Right cardiac atrium (tissue), 5 donors: ENCODE measurements at regions of chr11 and their contacts with region 1.

Region 1: GRCh38 chr11:76436020-76436419 is 8.8 kb upstream of the EMSY start:
- DNase-seq: no peak
- ATAC-seq: no peak
- H3K4me3 ChIP-seq: no peak overlapping the region
- H3K27ac ChIP-seq: no peak overlapping the region
- H3K4me1 ChIP-seq: no peaks in the 10 kb centered on the region
- H3K27me3 ChIP-seq: no peaks in the 10 kb centered on the region

Region 2: GRCh38 chr11:76380967-76381719 is 54.9 kb before region 1 on chr11 and contains the starts of genes GVQW3 and THAP12:
- intact Hi-C with region 1: loop called in 1 of 4 experiments (anchors 10 kb)
- DNase-seq: peak; percentile 97 to 99 (median 99)
- ATAC-seq: peak; percentile 99
- H3K4me3 ChIP-seq: peak within 1 kb of the TSS; percentile 92
- H3K27ac ChIP-seq: peak within 1 kb of the TSS; percentile 31
- H3K4me1 ChIP-seq: peaks cover 7% of the 10 kb centered on the region
- H3K27me3 ChIP-seq: no peaks in the 10 kb centered on the region
- total RNA-seq, gene GVQW3: 0.92 to 3.5 (median 2.1) TPM
- total RNA-seq, gene THAP12: 18.0 to 23.6 (median 19.7) TPM

Region 3: DNA sequence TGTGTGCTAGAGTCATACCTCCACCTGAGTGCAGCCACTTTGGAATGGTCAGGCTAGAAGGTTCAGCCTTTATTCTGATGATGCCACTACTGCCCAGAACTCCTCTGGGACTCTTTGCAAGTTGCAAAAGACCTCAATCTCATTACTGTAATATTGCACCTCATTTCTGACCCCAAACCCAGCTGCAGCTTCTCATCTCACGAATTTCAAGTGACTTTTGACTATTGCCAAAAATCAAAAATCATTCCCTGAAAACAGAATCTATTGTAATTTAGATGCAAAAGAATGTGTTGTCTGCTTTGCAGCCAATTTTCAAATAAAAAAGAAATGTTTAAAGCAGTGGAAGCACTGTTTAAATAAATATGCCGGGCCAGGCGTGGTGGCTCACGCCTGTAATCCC is 29.7 kb before region 1 on chr11:
- intact Hi-C with region 1: no loop called
- DNase-seq: no peak
- ATAC-seq: no peak
- H3K4me3 ChIP-seq: no peak overlapping the region
- H3K27ac ChIP-seq: no peak overlapping the region
- H3K4me1 ChIP-seq: no peaks in the 10 kb centered on the region
- H3K27me3 ChIP-seq: no peaks in the 10 kb centered on the region

Region 4: DNA sequence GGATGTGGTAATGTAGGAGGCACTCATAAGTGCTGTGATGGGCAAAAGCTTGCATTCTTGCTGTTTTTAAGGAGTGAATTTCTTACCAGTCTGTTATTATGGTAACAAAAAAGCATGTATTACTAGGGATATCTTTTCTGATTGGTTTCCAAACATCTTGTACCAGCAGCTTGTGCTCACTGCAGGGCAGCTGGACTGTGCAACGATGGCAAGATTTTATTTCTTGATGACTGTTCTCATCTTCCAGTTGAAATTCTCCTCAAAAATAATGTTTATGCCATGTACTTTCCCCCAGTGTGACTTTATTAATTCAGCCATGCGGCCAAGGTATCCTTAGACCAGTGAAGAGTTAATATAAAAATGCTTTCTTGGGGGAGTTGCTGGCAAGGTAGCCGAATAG is 44.2 kb after region 1 on chr11:
- intact Hi-C with region 1: no loop called
- DNase-seq: no peak
- ATAC-seq: no peak
- H3K4me3 ChIP-seq: no peak overlapping the region
- H3K27ac ChIP-seq: no peak overlapping the region
- H3K4me1 ChIP-seq: no peaks in the 10 kb centered on the region
- H3K27me3 ChIP-seq: no peaks in the 10 kb centered on the region

Region 5: DNA sequence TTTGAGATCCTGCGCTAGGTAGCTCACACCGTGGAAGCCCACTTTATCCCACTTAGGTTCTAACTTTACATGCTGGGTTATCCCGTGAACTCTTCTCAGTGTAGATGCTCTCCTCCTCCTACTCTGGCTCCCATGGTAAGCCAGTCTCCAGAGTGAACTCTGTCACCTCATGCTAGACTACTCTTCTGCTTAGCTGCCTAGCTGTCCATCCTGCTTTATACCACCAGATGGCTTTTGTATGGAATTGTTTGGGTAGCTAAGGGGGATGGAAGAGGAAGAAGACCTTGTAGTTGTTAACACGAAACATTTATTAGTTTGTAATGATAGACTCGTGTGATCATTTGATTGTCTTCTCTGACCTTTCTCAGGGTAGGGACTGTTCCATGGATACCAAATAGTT is 55.6 kb after region 1 on chr11:
- intact Hi-C with region 1: no loop called
- DNase-seq: no peak
- ATAC-seq: no peak
- H3K4me3 ChIP-seq: no peak overlapping the region
- H3K27ac ChIP-seq: no peak overlapping the region
- H3K4me1 ChIP-seq: no peaks in the 10 kb centered on the region
- H3K27me3 ChIP-seq: no peaks in the 10 kb centered on the region